ENCODE measurements at regions of chr2 and their contacts with region 1.

Region 1: GRCh38 chr2:85678794-85679672 is 11.0 kb upstream of the SFTPB start:
- DNase-seq: peak; percentile 80 to 93 (median 90)
- ATAC-seq: peak; percentile 98
- H3K4me3 ChIP-seq: no peak overlapping the region
- H3K27ac ChIP-seq: no peak overlapping the region
- H3K4me1 ChIP-seq: peaks cover 7 to 11% of the 10 kb centered on the region in 2 experiments; a peak in 3 of 5 replicates
- H3K27me3 ChIP-seq: peaks cover 11 to 27% of the 10 kb centered on the region in 2 experiments; a peak in 3 of 5 replicates
- CTCF ChIP-seq: peak; percentile 94 to 97 (median 94)
- EP300 ChIP-seq: no peak
- POLR2A ChIP-seq: no peak
- RAD21 ChIP-seq: peak; percentile 72 to 85

Region 2: DNA sequence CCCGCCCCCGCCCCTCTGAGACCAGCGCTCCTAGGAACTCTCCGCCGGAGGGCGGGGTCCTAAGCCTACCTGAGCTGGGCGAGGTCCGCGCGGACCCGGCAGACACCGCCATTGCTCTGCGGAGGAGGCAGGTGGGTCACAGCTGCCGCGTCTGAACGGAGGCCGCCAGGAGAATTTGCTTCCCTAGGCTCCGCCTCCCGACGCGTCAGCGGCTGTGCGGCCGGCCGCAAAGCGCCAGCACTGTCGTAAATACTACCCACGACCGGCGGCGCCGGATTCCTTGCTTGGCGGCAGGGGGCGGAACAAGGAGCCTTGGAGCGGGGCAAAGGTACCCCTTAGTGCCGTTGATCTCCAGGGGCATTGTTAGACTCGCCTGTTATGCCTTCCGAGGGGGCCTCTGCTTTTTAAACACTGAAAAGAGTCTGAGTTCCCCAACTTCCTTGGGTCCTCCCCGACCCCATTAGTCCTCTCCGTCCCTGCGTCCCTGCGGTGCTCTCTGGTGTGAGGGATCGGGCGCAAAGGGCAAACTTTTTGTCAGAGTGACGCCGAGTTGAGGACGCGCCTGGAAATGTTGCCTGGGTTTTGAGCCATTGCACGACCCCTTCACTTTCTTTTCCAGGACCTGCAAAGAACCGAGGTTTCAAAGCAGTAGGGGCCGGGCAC is 117.6 kb before region 1 on chr2 and contains the start of gene GGCX:
- CTCF ChIA-PET with region 1: no interaction called
- POLR2A ChIA-PET with region 1: no interaction called
- in situ Hi-C with region 1: no loop called
- intact Hi-C with region 1: no loop called
- DNase-seq: peak; percentile 90 to 97 (median 92)
- ATAC-seq: peak; percentile 94
- H3K4me3 ChIP-seq: peak within 1 kb of the TSS; percentile 79
- H3K27ac ChIP-seq: peak within 1 kb of the TSS; percentile 95
- H3K4me1 ChIP-seq: peaks cover 18 to 26% of the 10 kb centered on the region in 2 experiments
- H3K27me3 ChIP-seq: no peaks in the 10 kb centered on the region
- CTCF ChIP-seq: peak in 1 of 3 experiments; percentile 12; a peak in 1 of 6 replicates
- EP300 ChIP-seq: no peak
- POLR2A ChIP-seq: peak; percentile 95
- RAD21 ChIP-seq: peak in 1 of 2 experiments; percentile 8; a peak in 1 of 4 replicates
- polyA plus RNA-seq, gene GGCX: 46.7 to 47.1 TPM

Region 3: GRCh38 chr2:85642725-85643124 is 36.3 kb before region 1 on chr2:
- CTCF ChIA-PET with region 1: no interaction called
- POLR2A ChIA-PET with region 1: no interaction called
- in situ Hi-C with region 1: no loop called
- intact Hi-C with region 1: no loop called
- DNase-seq: no peak
- ATAC-seq: no peak
- H3K4me3 ChIP-seq: no peak overlapping the region
- H3K27ac ChIP-seq: no peak overlapping the region
- H3K4me1 ChIP-seq: no peaks in the 10 kb centered on the region
- H3K27me3 ChIP-seq: no peaks in the 10 kb centered on the region
- CTCF ChIP-seq: no peak
- EP300 ChIP-seq: no peak
- POLR2A ChIP-seq: no peak
- RAD21 ChIP-seq: no peak

Region 4: DNA sequence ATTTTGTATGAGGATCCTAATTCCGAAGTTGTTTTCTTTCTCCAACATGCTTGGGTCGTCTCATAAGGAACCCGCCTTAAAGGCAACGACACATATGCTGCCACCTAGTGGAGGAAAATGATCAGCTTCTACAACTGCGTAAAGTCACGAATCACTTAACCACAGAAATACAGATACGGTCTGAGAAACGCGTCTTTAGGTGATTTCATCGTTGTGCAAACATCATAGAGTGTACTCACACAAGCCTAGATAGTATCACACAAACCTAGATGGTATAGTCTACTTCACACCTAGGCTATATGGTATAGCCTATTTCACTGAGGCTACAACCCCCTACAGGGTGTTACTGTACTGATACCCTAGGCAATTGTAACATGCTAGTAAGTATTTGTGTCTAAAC is 28.3 kb after region 1 on chr2:
- CTCF ChIA-PET with region 1: interaction called, 14 read pairs
- POLR2A ChIA-PET with region 1: no interaction called
- in situ Hi-C with region 1: no loop called
- intact Hi-C with region 1: loop called (anchors 1 kb)
- DNase-seq: peak; percentile 73 to 87 (median 74)
- ATAC-seq: peak; percentile 89
- H3K4me3 ChIP-seq: no peak overlapping the region
- H3K27ac ChIP-seq: no peak overlapping the region
- H3K4me1 ChIP-seq: peaks cover 5 to 29% of the 10 kb centered on the region in 2 experiments
- H3K27me3 ChIP-seq: peaks cover 0 to 9% of the 10 kb centered on the region in 2 experiments; a peak in 2 of 5 replicates
- CTCF ChIP-seq: peak; percentile 82 to 92 (median 88)
- EP300 ChIP-seq: 0 out of 2 replicates have a peak, but pooled peaks have one; percentile 10
- POLR2A ChIP-seq: no peak
- RAD21 ChIP-seq: peak; percentile 68 to 79

Region 5: DNA sequence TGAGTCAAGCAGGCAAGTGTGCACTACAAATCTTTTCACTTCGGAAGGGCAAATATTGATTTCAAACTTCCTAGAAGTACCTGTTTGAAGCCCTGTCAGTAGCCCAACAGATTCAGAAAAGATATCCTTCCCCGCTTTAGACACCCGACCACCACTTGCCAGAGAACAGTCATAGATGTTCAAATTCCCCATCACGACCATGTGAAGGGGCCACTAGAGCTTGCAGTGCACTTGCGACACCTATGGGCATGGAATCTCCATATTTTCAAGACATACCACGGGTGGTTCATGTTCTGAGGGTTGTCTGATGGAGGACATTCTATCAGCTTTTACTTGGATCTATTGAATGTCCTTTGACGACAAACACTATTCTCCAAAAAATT is 39.0 kb after region 1 on chr2:
- CTCF ChIA-PET with region 1: interaction called, 3 read pairs
- POLR2A ChIA-PET with region 1: no interaction called
- in situ Hi-C with region 1: no loop called
- intact Hi-C with region 1: loop called (anchors 1 kb)
- DNase-seq: peak; percentile 36 to 55 (median 42)
- ATAC-seq: peak; percentile 86
- H3K4me3 ChIP-seq: no peak overlapping the region
- H3K27ac ChIP-seq: no peak overlapping the region
- H3K4me1 ChIP-seq: peaks cover 7 to 15% of the 10 kb centered on the region in 2 experiments; a peak in 3 of 5 replicates
- H3K27me3 ChIP-seq: peaks cover 3 to 31% of the 10 kb centered on the region in 2 experiments; a peak in 4 of 5 replicates
- CTCF ChIP-seq: peak; percentile 60 to 67 (median 67)
- EP300 ChIP-seq: no peak
- POLR2A ChIP-seq: no peak
- RAD21 ChIP-seq: peak; percentile 62 to 75

Region 6: GRCh38 chr2:85728883-85729824 is 50.1 kb after region 1 on chr2:
- CTCF ChIA-PET with region 1: no interaction called
- POLR2A ChIA-PET with region 1: no interaction called
- in situ Hi-C with region 1: no loop called
- intact Hi-C with region 1: no loop called
- DNase-seq: peak; percentile 84 to 89 (median 86)
- ATAC-seq: peak; percentile 100
- H3K4me3 ChIP-seq: no peak overlapping the region
- H3K27ac ChIP-seq: no peak overlapping the region
- H3K4me1 ChIP-seq: peaks cover 0 to 4% of the 10 kb centered on the region in 2 experiments; a peak in 2 of 5 replicates
- H3K27me3 ChIP-seq: peaks cover 18 to 60% of the 10 kb centered on the region in 2 experiments
- CTCF ChIP-seq: peak; percentile 95 to 96 (median 95)
- EP300 ChIP-seq: no peak
- POLR2A ChIP-seq: no peak
- RAD21 ChIP-seq: peak; percentile 88 to 94

Measured in K562 (cell line).